Left ventricle myocardium inferior (tissue), 1 donor: ENCODE measurements at regions of chr16 and their contacts with region 1.

Region 1: DNA sequence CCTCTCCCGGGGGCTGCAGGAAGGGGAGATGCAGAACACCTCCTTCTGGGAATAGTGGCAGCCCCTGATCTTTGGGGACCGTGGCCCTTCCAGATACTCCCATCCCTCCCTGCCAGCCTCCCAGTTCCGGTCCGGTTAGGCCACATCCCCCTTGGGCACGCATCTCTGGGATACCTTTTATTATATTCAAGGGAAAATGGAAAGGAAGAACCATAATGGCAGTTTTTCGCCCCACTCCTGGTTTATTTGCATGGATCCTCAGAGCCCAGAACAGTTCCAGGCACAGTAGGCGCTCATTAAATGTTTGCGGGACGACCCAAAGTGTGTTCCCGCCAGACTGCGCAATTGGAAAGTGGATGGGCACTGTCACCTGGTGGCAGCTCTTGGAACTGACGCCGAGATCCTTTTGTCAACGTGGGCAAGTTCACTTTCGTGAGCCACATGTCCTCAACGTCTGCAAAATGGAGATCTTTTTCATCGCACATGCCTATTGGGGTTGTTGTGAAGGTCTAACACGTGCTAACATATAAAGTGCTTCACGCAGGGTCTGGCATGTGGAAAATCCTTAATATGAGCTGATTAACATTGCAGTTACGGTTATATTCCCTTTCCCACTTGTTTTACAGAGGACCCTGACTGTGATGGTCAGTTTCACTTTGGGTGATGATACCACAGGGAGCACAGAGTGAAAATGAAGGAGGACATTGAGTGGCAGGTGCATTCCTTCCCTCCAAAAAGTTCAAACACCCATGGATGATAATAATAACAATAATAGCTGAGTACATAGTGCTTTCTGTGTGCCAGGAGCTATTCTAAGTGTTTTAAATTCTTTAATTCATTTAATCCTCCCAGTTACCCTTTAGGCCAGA is 1.7 kb upstream of the GPRC5B start:
- DNase-seq: peak; percentile 76
- H3K4me3 ChIP-seq: peak overlapping the region; percentile 93
- H3K27ac ChIP-seq: peak overlapping the region; percentile 33
- H3K4me1 ChIP-seq: peaks cover 47% of the 10 kb centered on the region
- H3K27me3 ChIP-seq: no peaks in the 10 kb centered on the region
- CTCF ChIP-seq: peak; percentile 100

Region 2: GRCh38 chr16:19601083-19601976 is 285.0 kb before region 1 on chr16:
- intact Hi-C with region 1: loop called (anchors 2 kb)
- DNase-seq: no peak
- H3K4me3 ChIP-seq: no peak overlapping the region
- H3K27ac ChIP-seq: no peak overlapping the region
- H3K4me1 ChIP-seq: peaks cover 20% of the 10 kb centered on the region
- H3K27me3 ChIP-seq: no peaks in the 10 kb centered on the region
- CTCF ChIP-seq: peak; percentile 75

Region 3: GRCh38 chr16:19639986-19640421 is 246.3 kb before region 1 on chr16:
- intact Hi-C with region 1: loop called (anchors 10 kb)
- DNase-seq: no peak
- H3K4me3 ChIP-seq: no peak overlapping the region
- H3K27ac ChIP-seq: peak overlapping the region; percentile 49
- H3K4me1 ChIP-seq: peaks cover 31% of the 10 kb centered on the region
- H3K27me3 ChIP-seq: no peaks in the 10 kb centered on the region
- CTCF ChIP-seq: no peak

Region 4: GRCh38 chr16:19831678-19832077 is 54.6 kb before region 1 on chr16:
- intact Hi-C with region 1: no loop called
- DNase-seq: no peak
- H3K4me3 ChIP-seq: no peak overlapping the region
- H3K27ac ChIP-seq: peak overlapping the region; percentile 77
- H3K4me1 ChIP-seq: peaks cover 38% of the 10 kb centered on the region
- H3K27me3 ChIP-seq: no peaks in the 10 kb centered on the region
- CTCF ChIP-seq: no peak

Region 5: DNA sequence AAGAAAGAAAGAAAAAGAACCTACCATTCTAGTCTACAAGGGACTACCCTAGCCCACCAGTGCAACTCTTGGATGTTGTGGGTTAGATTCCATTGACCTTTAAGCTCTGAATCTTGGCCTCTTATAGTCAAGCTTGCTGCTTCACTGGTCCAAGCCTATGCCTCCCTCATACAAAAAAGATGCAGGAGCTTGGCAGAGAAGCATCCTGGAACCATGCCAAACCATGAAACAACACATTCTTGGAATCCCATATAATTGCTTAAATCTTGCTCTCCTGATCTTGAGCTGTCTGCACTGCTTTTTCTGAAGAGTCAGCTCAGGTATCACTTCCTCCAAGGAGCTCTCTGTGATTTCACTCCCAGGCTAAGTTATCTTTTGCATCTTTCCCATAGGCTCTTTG is 305.3 kb after region 1 on chr16:
- intact Hi-C with region 1: no loop called
- DNase-seq: no peak
- H3K4me3 ChIP-seq: no peak overlapping the region
- H3K27ac ChIP-seq: no peak overlapping the region
- H3K4me1 ChIP-seq: no peaks in the 10 kb centered on the region
- H3K27me3 ChIP-seq: peaks cover 26% of the 10 kb centered on the region
- CTCF ChIP-seq: no peak